Naive thymus-derived CD4-positive, alpha-beta T cell (primary cell): ENCODE measurements at regions of chr18 and their contacts with region 1.

Region 1: DNA sequence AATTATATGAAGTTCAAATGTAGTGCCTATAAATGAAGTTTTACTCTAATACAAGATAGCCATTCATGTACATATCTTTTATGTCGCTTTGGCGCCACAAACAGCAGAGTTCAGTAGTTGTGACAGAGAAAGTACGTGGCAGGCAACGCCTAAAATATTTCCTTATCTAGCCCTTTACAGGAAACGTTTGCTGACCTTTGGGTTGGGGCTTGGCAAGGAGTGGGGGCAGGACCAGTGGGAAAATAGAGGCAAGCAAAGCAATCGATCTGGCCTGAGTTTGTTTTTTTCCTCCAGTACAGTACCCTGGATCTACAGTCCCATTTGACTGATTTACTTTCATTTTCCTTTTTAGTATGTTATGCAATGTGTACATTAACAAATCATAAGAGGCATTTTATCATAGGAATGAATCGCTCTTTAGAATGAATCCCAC is 13.1 kb downstream of the CCDC68 start:
- DNase-seq: peak in 7 of 9 donors; percentile 4 to 41 (median 25)
- ATAC-seq: peak; percentile 79
- H3K4me3 ChIP-seq: peak overlapping the region; percentile 68
- H3K4me3 Mint-ChIP-seq: peak overlapping the region; percentile 72 to 94 (median 90)
- H3K27ac ChIP-seq: peak overlapping the region; percentile 63
- H3K27ac Mint-ChIP-seq: peak overlapping the region; percentile 83 to 97 (median 91)
- H3K4me1 ChIP-seq: peaks cover 0 to 5% of the 10 kb centered on the region in 2 donors
- H3K4me1 Mint-ChIP-seq: peaks cover 9 to 28% (median 19%) of the 10 kb centered on the region in 7 donors
- H3K27me3 ChIP-seq: no peaks in the 10 kb centered on the region
- H3K27me3 Mint-ChIP-seq: peaks cover 0 to 18% (median 0%) of the 10 kb centered on the region in 5 donors

Region 2: GRCh38 chr18:54444319-54444914 is 501.7 kb before region 1 on chr18:
- CTCF ChIA-PET with region 1: no interaction called
- POLR2A ChIA-PET with region 1: no interaction called
- intact Hi-C with region 1: loop called in 1 of 2 experiments (anchors 1 kb)
- DNase-seq: peak in 2 of 9 donors; percentile 11 to 31
- ATAC-seq: no peak
- H3K4me3 ChIP-seq: no peak overlapping the region
- H3K4me3 Mint-ChIP-seq: no peak overlapping the region
- H3K27ac ChIP-seq: no peak overlapping the region
- H3K27ac Mint-ChIP-seq: no peak overlapping the region
- H3K4me1 ChIP-seq: no peaks in the 10 kb centered on the region
- H3K4me1 Mint-ChIP-seq: no peaks in the 10 kb centered on the region
- H3K27me3 ChIP-seq: no peaks in the 10 kb centered on the region
- H3K27me3 Mint-ChIP-seq: peaks cover 12 to 50% (median 39%) of the 10 kb centered on the region in 5 donors

Region 3: DNA sequence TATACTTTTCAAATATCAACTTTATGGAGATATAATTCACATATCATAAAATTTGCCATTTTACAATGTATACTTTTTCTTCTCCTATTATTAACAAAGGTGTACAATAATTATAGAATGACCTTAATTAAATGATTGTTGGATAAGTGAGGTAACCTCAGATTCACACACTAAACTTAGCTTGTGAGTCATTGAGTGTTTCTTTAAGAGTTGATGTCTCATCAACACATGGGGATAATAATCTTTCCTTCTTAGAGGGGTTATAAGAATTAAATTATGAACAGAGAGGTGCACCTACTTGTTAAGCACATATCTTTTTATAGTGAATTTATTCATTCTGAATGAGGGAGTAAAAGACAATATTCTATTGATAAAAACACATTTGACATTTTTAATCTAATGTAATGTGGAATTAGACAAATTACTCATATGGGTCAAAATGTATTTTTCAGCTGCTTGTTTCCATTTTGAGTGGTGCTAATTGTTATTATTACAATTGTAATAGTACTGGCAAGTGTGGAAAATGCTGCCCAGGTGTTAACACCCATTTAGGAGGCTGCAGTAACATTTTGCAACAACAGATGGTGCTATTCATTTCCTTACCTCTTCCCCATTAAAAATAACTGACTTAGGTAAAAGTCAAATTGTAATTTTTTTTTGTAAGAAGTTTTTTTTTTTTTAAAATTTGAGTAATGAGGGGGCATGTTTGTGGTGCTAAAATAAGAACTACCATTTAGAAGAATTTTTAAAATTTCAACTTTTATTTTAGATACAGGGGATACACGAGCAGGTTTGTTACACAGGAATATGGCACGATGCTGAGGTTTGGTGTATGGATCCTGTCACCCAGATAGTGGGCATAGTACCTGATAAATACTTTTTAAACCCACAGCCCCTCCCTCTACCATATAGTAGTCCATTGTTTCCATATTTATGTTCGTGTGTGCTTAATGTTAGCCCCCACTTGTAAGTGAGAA is 387.3 kb before region 1 on chr18:
- CTCF ChIA-PET with region 1: no interaction called
- POLR2A ChIA-PET with region 1: no interaction called
- intact Hi-C with region 1: loop called (anchors 1 kb)
- DNase-seq: peak in 3 of 9 donors; percentile 6 to 12 (median 7)
- ATAC-seq: no peak
- H3K4me3 ChIP-seq: no peak overlapping the region
- H3K4me3 Mint-ChIP-seq: no peak overlapping the region
- H3K27ac ChIP-seq: no peak overlapping the region
- H3K27ac Mint-ChIP-seq: no peak overlapping the region
- H3K4me1 ChIP-seq: no peaks in the 10 kb centered on the region
- H3K4me1 Mint-ChIP-seq: no peaks in the 10 kb centered on the region
- H3K27me3 ChIP-seq: no peaks in the 10 kb centered on the region
- H3K27me3 Mint-ChIP-seq: peaks cover 0 to 8% (median 0%) of the 10 kb centered on the region in 5 donors

Region 4: GRCh38 chr18:54679318-54680149 is 266.6 kb before region 1 on chr18:
- CTCF ChIA-PET with region 1: no interaction called
- POLR2A ChIA-PET with region 1: no interaction called
- intact Hi-C with region 1: loop called (anchors 1 kb)
- DNase-seq: peak in 6 of 9 donors; percentile 1 to 49 (median 26)
- ATAC-seq: no peak
- H3K4me3 ChIP-seq: no peak overlapping the region
- H3K4me3 Mint-ChIP-seq: no peak overlapping the region
- H3K27ac ChIP-seq: no peak overlapping the region
- H3K27ac Mint-ChIP-seq: no peak overlapping the region
- H3K4me1 ChIP-seq: no peaks in the 10 kb centered on the region
- H3K4me1 Mint-ChIP-seq: no peaks in the 10 kb centered on the region
- H3K27me3 ChIP-seq: no peaks in the 10 kb centered on the region
- H3K27me3 Mint-ChIP-seq: peaks cover 0 to 30% (median 0%) of the 10 kb centered on the region in 5 donors

Region 5: DNA sequence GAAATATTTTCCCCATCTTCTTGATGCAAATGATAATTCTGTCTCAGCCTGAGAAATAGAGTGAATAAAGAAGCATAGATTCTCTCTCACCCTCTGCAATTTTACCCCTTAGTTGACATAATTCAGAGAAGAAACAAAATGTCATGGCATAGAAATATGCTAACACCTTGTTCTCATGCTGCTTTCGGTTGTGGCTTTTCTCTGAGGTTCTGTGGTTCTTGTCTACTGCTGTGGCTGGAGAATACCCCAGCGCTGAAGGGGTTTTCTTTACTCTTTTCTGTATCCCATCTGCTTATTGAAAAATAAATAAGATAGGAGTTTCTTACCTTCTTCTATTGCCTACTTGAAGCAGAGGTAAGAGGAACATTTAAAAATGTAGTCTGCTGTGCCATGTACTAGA is 133.3 kb before region 1 on chr18:
- CTCF ChIA-PET with region 1: no interaction called
- POLR2A ChIA-PET with region 1: no interaction called
- intact Hi-C with region 1: loop called in 1 of 2 experiments (anchors 5 kb)
- DNase-seq: no peak
- ATAC-seq: peak; percentile 79
- H3K4me3 ChIP-seq: no peak overlapping the region
- H3K4me3 Mint-ChIP-seq: peak overlapping the region in 1 of 10 donors; percentile 11
- H3K27ac ChIP-seq: no peak overlapping the region
- H3K27ac Mint-ChIP-seq: no peak overlapping the region
- H3K4me1 ChIP-seq: peaks cover 0 to 3% of the 10 kb centered on the region in 2 donors
- H3K4me1 Mint-ChIP-seq: peaks cover 3 to 22% (median 9%) of the 10 kb centered on the region in 7 donors
- H3K27me3 ChIP-seq: no peaks in the 10 kb centered on the region
- H3K27me3 Mint-ChIP-seq: peaks cover 0 to 41% (median 8%) of the 10 kb centered on the region in 5 donors

Region 6: DNA sequence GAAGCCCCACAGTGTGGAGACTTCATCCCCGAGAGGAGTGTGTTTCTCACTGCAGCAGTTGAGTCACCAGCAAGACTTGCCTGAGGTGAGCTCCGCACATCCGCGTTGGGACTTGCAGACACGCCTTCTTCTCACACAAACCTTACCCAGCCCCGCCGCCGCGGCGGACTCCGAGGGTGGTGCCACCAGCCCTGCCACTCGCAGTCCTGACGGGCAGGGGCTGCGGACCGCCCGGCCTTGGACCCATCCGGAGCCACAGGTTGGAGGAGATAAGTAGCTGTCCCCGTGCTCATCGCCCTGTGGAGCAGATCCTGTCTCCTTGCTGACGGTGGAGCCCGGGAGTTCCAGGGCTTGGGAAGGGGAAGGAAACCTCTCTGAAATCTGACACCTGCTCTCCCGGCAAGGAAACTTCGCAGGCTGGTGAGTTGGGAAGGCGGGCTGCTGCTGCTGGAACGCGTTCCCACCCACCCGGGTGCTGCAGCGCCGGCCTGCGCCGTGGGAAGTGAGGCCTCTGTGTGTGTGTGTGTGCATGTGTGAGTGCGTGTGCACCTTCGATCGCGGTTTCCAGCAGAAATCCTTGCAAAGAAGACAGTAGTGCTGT is 117.8 kb before region 1 on chr18 and contains the start of gene RAB27B:
- CTCF ChIA-PET with region 1: no interaction called
- POLR2A ChIA-PET with region 1: no interaction called
- intact Hi-C with region 1: loop called in 1 of 2 experiments (anchors 5 kb)
- DNase-seq: peak; percentile 41 to 68 (median 61)
- ATAC-seq: peak; percentile 96
- H3K4me3 ChIP-seq: peak within 1 kb of the TSS; percentile 72
- H3K4me3 Mint-ChIP-seq: peak within 1 kb of the TSS; percentile 87 to 95 (median 92)
- H3K27ac ChIP-seq: peak within 1 kb of the TSS; percentile 63
- H3K27ac Mint-ChIP-seq: peak within 1 kb of the TSS in 8 of 9 donors; percentile 60 to 87 (median 76)
- H3K4me1 ChIP-seq: no peaks in the 10 kb centered on the region
- H3K4me1 Mint-ChIP-seq: peaks cover 17 to 45% (median 24%) of the 10 kb centered on the region in 7 donors
- H3K27me3 ChIP-seq: no peaks in the 10 kb centered on the region
- H3K27me3 Mint-ChIP-seq: peaks cover 0 to 34% (median 0%) of the 10 kb centered on the region in 5 donors
- total RNA-seq, gene RAB27B: 1.3 to 6.4 (median 1.6) TPM